B cell (primary cell): ENCODE measurements at regions of chr2 and their contacts with region 1.

Region 1: DNA sequence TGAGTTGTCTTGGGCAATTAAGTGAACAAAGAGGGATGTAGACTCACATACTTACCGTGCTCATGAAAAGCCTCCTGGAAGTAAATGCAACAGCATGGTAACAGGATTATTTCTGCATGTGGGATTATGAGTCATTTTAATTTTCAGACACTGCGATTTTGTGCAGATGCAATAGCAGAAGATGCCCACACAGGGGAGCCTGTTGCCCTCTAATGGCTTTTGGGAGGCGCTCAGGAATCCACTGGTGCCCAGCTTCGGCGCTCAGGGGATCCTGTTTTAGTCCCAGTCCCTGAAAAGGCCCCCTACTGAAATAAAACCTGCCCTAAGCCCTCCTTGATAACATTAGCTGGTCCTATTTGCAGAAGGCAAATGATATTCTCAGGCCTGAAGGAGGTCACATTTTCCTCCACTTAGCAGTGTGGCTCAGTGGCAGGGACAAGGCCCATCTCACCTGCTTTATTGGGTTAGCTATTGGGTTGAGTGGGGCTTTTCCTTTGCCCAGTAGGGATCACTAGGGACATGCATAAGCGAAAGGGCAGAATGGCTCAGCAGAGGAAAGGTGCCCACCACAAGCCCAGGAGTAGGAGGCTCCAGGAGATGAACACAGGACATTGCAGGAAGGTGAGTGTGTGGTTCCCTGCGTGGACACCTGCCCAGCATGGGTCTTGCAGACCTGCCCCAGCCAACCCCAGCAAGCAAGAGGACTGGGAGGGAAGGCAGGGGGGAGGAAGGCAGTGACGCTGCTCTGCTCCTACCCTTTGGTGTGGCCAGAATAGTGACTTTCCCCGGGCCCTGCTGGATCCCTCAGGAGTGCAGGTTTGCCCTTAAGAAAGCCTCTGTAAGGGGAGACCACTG is 26.5 kb upstream of the KCNS3 start:
- DNase-seq: peak; percentile 51
- ATAC-seq: peak; percentile 69
- H3K4me3 ChIP-seq: no peak overlapping the region
- H3K4me3 Mint-ChIP-seq: no peak overlapping the region
- H3K27ac ChIP-seq: no peak overlapping the region
- H3K27ac Mint-ChIP-seq: no peak overlapping the region
- H3K4me1 ChIP-seq: peaks cover 0 to 5% of the 10 kb centered on the region in 2 donors
- H3K4me1 Mint-ChIP-seq: peaks cover 5% of the 10 kb centered on the region
- H3K27me3 ChIP-seq: peaks cover 0 to under 1% (median 0%) of the 10 kb centered on the region in 4 experiments
- H3K27me3 Mint-ChIP-seq: peaks cover 3% of the 10 kb centered on the region
- CTCF ChIP-seq: peak; percentile 81

Region 2: GRCh38 chr2:17892770-17893534 is 41.0 kb after region 1 on chr2:
- CTCF ChIA-PET with region 1: no interaction called
- POLR2A ChIA-PET with region 1: no interaction called
- intact Hi-C with region 1: no loop called
- DNase-seq: no peak
- ATAC-seq: no peak
- H3K4me3 ChIP-seq: no peak overlapping the region
- H3K4me3 Mint-ChIP-seq: no peak overlapping the region
- H3K27ac ChIP-seq: no peak overlapping the region
- H3K27ac Mint-ChIP-seq: no peak overlapping the region
- H3K4me1 ChIP-seq: no peaks in the 10 kb centered on the region
- H3K4me1 Mint-ChIP-seq: no peaks in the 10 kb centered on the region
- H3K27me3 ChIP-seq: peaks cover 0 to 14% (median 6%) of the 10 kb centered on the region in 4 experiments
- H3K27me3 Mint-ChIP-seq: peaks cover 42% of the 10 kb centered on the region
- CTCF ChIP-seq: no peak

Region 3: DNA sequence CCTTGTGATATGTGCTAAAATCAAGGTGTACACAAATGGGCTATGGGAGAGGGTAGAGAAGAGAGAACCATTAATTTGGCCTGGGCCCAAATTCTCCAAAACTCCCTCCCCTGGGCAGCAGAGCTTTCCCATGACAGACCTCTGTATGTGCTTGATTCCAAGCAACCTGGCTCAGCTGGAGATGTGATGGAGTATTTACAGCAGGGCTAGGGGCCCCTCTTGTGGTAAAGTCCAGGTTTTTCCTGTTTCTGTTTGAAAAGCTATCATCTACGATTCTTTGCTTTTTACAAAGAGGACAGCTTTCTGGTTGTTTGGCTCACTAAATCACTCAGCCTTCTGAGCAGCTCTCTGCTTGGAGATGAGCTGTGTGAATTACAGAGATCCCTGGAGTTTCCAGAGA is 66.8 kb after region 1 on chr2:
- CTCF ChIA-PET with region 1: interaction called, 11 read pairs
- POLR2A ChIA-PET with region 1: no interaction called
- intact Hi-C with region 1: no loop called
- DNase-seq: no peak
- ATAC-seq: no peak
- H3K4me3 ChIP-seq: no peak overlapping the region
- H3K4me3 Mint-ChIP-seq: no peak overlapping the region
- H3K27ac ChIP-seq: no peak overlapping the region
- H3K27ac Mint-ChIP-seq: no peak overlapping the region
- H3K4me1 ChIP-seq: no peaks in the 10 kb centered on the region
- H3K4me1 Mint-ChIP-seq: no peaks in the 10 kb centered on the region
- H3K27me3 ChIP-seq: peaks cover 0 to 5% (median 0%) of the 10 kb centered on the region in 4 experiments
- H3K27me3 Mint-ChIP-seq: peaks cover 16% of the 10 kb centered on the region
- CTCF ChIP-seq: no peak

Region 4: GRCh38 chr2:18149645-18150246 is 297.8 kb after region 1 on chr2:
- CTCF ChIA-PET with region 1: interaction called, 12 read pairs
- POLR2A ChIA-PET with region 1: no interaction called
- intact Hi-C with region 1: no loop called
- DNase-seq: peak; percentile 25
- ATAC-seq: no peak
- H3K4me3 ChIP-seq: no peak overlapping the region
- H3K4me3 Mint-ChIP-seq: no peak overlapping the region
- H3K27ac ChIP-seq: no peak overlapping the region
- H3K27ac Mint-ChIP-seq: no peak overlapping the region
- H3K4me1 ChIP-seq: no peaks in the 10 kb centered on the region
- H3K4me1 Mint-ChIP-seq: no peaks in the 10 kb centered on the region
- H3K27me3 ChIP-seq: no peaks in the 10 kb centered on the region
- H3K27me3 Mint-ChIP-seq: peaks cover 22% of the 10 kb centered on the region
- CTCF ChIP-seq: peak; percentile 70

Region 5: DNA sequence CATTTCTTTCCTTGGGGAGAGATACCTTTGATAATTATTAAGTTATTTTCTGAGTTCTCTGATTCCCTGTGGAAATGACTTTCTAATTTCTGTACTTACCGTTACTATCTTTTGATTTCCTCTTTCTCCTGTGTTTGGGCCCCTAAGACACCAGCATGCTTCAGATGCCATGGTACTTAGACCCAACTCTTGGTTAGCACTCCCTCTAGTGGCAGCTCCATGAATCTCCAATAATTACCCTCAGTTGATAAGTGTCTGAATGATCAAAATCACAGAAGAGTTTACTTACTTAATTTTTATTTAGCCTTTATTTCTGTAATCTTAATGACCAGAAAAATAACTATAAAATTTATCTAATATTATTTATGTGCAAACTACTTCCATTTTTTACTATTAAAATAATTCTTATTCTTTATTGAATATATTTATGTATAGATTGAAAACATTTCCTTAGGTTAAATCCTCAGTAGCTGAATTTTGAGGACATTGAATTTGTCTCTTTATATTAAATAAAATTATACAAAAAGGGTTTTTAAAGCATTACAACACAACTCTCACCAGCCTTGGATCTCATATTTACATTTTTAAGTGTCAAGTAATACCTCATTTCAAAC is 326.9 kb after region 1 on chr2:
- CTCF ChIA-PET with region 1: interaction called, 5 read pairs
- POLR2A ChIA-PET with region 1: no interaction called
- intact Hi-C with region 1: loop called (anchors 1 kb)
- DNase-seq: peak; percentile 55
- ATAC-seq: peak; percentile 43
- H3K4me3 ChIP-seq: no peak overlapping the region
- H3K4me3 Mint-ChIP-seq: no peak overlapping the region
- H3K27ac ChIP-seq: no peak overlapping the region
- H3K27ac Mint-ChIP-seq: no peak overlapping the region
- H3K4me1 ChIP-seq: no peaks in the 10 kb centered on the region
- H3K4me1 Mint-ChIP-seq: no peaks in the 10 kb centered on the region
- H3K27me3 ChIP-seq: peaks cover 0 to 3% (median 0%) of the 10 kb centered on the region in 4 experiments
- H3K27me3 Mint-ChIP-seq: peaks cover 23% of the 10 kb centered on the region
- CTCF ChIP-seq: peak; percentile 73

Region 6: DNA sequence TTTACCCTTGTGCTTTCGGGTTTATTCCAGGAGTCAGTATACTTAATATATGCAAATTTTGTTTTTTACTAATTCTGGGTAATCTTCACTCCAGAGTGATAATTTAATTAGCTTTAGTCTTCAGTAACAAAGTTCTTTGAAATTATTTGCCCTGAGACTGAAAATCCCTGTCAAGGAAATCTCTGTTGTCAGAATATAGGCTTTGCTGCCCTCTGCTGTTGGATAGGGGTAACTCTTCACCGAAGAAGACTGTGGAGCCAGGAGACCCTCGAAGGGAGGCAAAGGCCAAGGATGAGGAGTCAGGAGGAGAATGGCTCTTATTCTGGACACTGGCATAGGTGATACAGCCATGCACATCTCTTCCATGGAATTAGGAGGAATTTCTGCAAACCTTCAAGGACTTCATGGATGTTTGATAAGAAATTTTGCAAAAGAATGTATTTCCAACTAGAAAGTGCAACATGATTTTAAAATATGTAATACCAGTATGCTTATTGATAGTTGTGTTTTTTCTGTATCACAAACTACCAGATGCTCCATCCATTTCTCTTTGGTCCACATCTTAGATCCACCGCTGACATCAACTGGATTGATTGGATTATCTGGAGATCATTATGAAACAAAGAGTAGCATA is 526.2 kb after region 1 on chr2:
- CTCF ChIA-PET with region 1: interaction called, 21 read pairs
- POLR2A ChIA-PET with region 1: no interaction called
- intact Hi-C with region 1: no loop called
- DNase-seq: peak; percentile 33
- ATAC-seq: no peak
- H3K4me3 ChIP-seq: no peak overlapping the region
- H3K4me3 Mint-ChIP-seq: no peak overlapping the region
- H3K27ac ChIP-seq: no peak overlapping the region
- H3K27ac Mint-ChIP-seq: no peak overlapping the region
- H3K4me1 ChIP-seq: no peaks in the 10 kb centered on the region
- H3K4me1 Mint-ChIP-seq: no peaks in the 10 kb centered on the region
- H3K27me3 ChIP-seq: peaks cover 0 to 8% (median 2%) of the 10 kb centered on the region in 4 experiments
- H3K27me3 Mint-ChIP-seq: peaks cover 24% of the 10 kb centered on the region
- CTCF ChIP-seq: peak; percentile 85